ENCODE measurements at regions of chr3 and their contacts with region 1.

Region 1: GRCh38 chr3:140180603-140181002 is 245.6 kb downstream of the CLSTN2 start:
- DNase-seq: no peak
- ATAC-seq: peak in 3 of 4 donors; percentile 71 to 86 (median 79)
- H3K4me3 ChIP-seq: no peak overlapping the region
- H3K27ac ChIP-seq: peak overlapping the region; percentile 81
- H3K4me1 ChIP-seq: peaks cover 33% of the 10 kb centered on the region
- H3K27me3 ChIP-seq: no peaks in the 10 kb centered on the region
- CTCF ChIP-seq: no peak

Region 2: GRCh38 chr3:139982404-139982803 is 198.2 kb before region 1 on chr3:
- intact Hi-C with region 1: no loop called
- DNase-seq: no peak
- ATAC-seq: no peak
- H3K4me3 ChIP-seq: no peak overlapping the region
- H3K27ac ChIP-seq: no peak overlapping the region
- H3K4me1 ChIP-seq: no peaks in the 10 kb centered on the region
- H3K27me3 ChIP-seq: no peaks in the 10 kb centered on the region
- CTCF ChIP-seq: peak; percentile 17

Region 3: GRCh38 chr3:140093742-140094141 is 86.9 kb before region 1 on chr3:
- intact Hi-C with region 1: loop called in 1 of 2 experiments (anchors 5 kb)
- DNase-seq: peak; percentile 58 to 59
- ATAC-seq: peak; percentile 88 to 99 (median 93)
- H3K4me3 ChIP-seq: peak overlapping the region; percentile 4
- H3K27ac ChIP-seq: peak overlapping the region; percentile 46
- H3K4me1 ChIP-seq: peaks cover 27% of the 10 kb centered on the region
- H3K27me3 ChIP-seq: no peaks in the 10 kb centered on the region
- CTCF ChIP-seq: no peak

Measured in psoas muscle (tissue), 8 donors.